ENCODE measurements at regions of chr13 and their contacts with region 1.

Region 1: DNA sequence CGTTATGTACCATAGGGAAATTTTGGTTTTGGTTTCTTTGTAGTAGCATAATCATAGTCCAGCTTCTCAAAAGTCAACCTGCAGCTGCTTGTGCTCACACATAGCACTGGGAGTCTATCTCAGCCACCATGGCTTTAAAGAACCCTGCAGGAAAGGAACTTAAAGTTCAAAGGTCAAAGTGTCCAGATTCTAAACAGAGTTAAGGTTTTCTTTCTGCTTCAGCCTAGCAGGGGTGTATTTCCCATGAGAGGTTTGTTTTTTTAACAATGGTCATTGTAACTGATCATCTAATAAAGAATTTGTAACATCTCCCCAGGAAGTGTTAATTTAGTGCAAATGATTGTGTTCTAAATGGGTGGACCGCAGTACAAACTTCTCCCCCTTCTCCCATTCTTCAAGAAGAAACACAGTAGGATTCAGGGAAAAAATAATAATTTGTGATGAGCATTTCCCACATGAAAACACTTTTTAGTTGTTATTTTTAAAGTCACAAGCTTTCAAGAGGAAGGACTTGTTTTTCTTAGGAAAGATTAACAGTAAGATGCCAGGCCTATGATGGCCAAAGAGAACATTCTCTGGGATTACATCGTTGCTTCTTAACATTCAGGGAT is 168.0 kb downstream of the EFNB2 start:
- DNase-seq: peak; percentile 86
- H3K4me3 ChIP-seq: no peak overlapping the region
- H3K27ac ChIP-seq: peak overlapping the region; percentile 15
- H3K4me1 ChIP-seq: peaks cover 21% of the 10 kb centered on the region
- H3K27me3 ChIP-seq: no peaks in the 10 kb centered on the region
- CTCF ChIP-seq: no peak
- POLR2A ChIP-seq: no peak

Region 2: GRCh38 chr13:105070452-105070851 is 1297.0 kb before region 1 on chr13:
- CTCF ChIA-PET with region 1: no interaction called
- POLR2A ChIA-PET with region 1: no interaction called
- dilution Hi-C with region 1: no loop called
- intact Hi-C with region 1: no loop called
- DNase-seq: no peak
- H3K4me3 ChIP-seq: no peak overlapping the region
- H3K27ac ChIP-seq: no peak overlapping the region
- H3K4me1 ChIP-seq: no peaks in the 10 kb centered on the region
- H3K27me3 ChIP-seq: no peaks in the 10 kb centered on the region
- CTCF ChIP-seq: no peak
- POLR2A ChIP-seq: no peak

Region 3: GRCh38 chr13:105518086-105518485 is 849.4 kb before region 1 on chr13:
- CTCF ChIA-PET with region 1: no interaction called
- POLR2A ChIA-PET with region 1: no interaction called
- dilution Hi-C with region 1: no loop called
- intact Hi-C with region 1: loop called (anchors 10 kb)
- DNase-seq: no peak
- H3K4me3 ChIP-seq: no peak overlapping the region
- H3K27ac ChIP-seq: no peak overlapping the region
- H3K4me1 ChIP-seq: peaks cover 4% of the 10 kb centered on the region
- H3K27me3 ChIP-seq: no peaks in the 10 kb centered on the region
- CTCF ChIP-seq: no peak
- POLR2A ChIP-seq: no peak

Measured in endothelial cell of umbilical vein (primary cell).